ENCODE measurements at regions of chr19 and their contacts with region 1.

Region 1: GRCh38 chr19:41785653-41786052 is 10.7 kb upstream of the CEACAM3 start:
- DNase-seq: no peak
- ATAC-seq: peak; percentile 93
- H3K4me3 ChIP-seq: no peak overlapping the region
- H3K27ac ChIP-seq: no peak overlapping the region
- H3K4me1 ChIP-seq: 0 out of 2 replicates have a peak, but pooled peaks cover 3% of the 10 kb centered on the region
- H3K27me3 ChIP-seq: peaks cover 2% of the 10 kb centered on the region; the same call in 1 of the 2 replicates
- CTCF ChIP-seq: peak; percentile 88

Region 2: DNA sequence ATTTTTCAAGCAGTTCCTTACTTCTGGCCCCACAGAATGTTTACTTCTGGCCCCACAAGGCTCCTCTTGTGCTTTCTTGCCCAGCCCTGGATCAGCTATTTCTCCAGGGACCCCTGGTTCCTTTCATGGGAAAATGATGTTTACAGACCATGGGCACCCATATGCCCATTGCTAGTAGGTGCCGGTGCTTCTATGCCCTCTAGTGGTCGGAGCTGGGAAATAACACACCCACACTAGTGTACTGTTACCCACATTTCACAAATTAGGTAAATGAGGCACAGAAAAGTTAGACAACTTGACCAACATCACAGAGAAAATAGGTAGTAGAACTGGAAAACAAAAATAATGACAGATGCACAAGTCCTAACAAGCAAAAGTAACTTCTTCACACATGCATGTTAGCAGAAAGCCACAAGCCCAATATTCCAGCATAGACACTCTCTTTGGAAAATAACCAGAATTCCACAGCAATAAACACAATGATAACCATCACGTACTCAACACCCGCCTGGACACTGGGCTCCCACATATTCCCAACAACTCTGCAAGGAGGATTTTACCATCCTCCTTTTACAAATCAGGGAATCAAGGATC is 31.6 kb before region 1 on chr19:
- CTCF ChIA-PET with region 1: interaction called, 7 read pairs
- POLR2A ChIA-PET with region 1: no interaction called
- in situ Hi-C with region 1: no loop called
- intact Hi-C with region 1: loop called (anchors 5 kb)
- DNase-seq: no peak
- ATAC-seq: peak; percentile 92
- H3K4me3 ChIP-seq: no peak overlapping the region
- H3K27ac ChIP-seq: no peak overlapping the region
- H3K4me1 ChIP-seq: no peaks in the 10 kb centered on the region
- H3K27me3 ChIP-seq: no peaks in the 10 kb centered on the region; the same call in 1 of the 2 replicates
- CTCF ChIP-seq: peak; percentile 80

Region 3: GRCh38 chr19:41775360-41775695 is 10.3 kb before region 1 on chr19:
- CTCF ChIA-PET with region 1: interaction called, 12 read pairs
- POLR2A ChIA-PET with region 1: no interaction called
- in situ Hi-C with region 1: no loop called
- intact Hi-C with region 1: no loop called
- DNase-seq: no peak
- ATAC-seq: no peak
- H3K4me3 ChIP-seq: no peak overlapping the region
- H3K27ac ChIP-seq: no peak overlapping the region
- H3K4me1 ChIP-seq: no peaks in the 10 kb centered on the region
- H3K27me3 ChIP-seq: no peaks in the 10 kb centered on the region; the same call in none of the 2 replicates
- CTCF ChIP-seq: no peak